PC-9 (cell line): ENCODE measurements at regions of chr3 and their contacts with region 1.

Region 1: GRCh38 chr3:26719134-26719533 is 96.6 kb downstream of the LRRC3B start:
- DNase-seq: no peak
- H3K4me3 ChIP-seq: no peak overlapping the region
- H3K27ac ChIP-seq: no peak overlapping the region
- H3K4me1 ChIP-seq: no peaks in the 10 kb centered on the region
- H3K27me3 ChIP-seq: no peaks in the 10 kb centered on the region
- CTCF ChIP-seq: no peak

Region 2: GRCh38 chr3:27585429-27585828 is 866.3 kb after region 1 on chr3:
- CTCF ChIA-PET with region 1: interaction called, 10 read pairs
- POLR2A ChIA-PET with region 1: no interaction called
- intact Hi-C with region 1: no loop called
- DNase-seq: no peak
- H3K4me3 ChIP-seq: no peak overlapping the region
- H3K27ac ChIP-seq: no peak overlapping the region
- H3K4me1 ChIP-seq: 0 out of 2 replicates have a peak, but pooled peaks cover 7% of the 10 kb centered on the region
- H3K27me3 ChIP-seq: no peaks in the 10 kb centered on the region
- CTCF ChIP-seq: no peak